ENCODE measurements at regions of chr14 and their contacts with region 1.

Region 1: DNA sequence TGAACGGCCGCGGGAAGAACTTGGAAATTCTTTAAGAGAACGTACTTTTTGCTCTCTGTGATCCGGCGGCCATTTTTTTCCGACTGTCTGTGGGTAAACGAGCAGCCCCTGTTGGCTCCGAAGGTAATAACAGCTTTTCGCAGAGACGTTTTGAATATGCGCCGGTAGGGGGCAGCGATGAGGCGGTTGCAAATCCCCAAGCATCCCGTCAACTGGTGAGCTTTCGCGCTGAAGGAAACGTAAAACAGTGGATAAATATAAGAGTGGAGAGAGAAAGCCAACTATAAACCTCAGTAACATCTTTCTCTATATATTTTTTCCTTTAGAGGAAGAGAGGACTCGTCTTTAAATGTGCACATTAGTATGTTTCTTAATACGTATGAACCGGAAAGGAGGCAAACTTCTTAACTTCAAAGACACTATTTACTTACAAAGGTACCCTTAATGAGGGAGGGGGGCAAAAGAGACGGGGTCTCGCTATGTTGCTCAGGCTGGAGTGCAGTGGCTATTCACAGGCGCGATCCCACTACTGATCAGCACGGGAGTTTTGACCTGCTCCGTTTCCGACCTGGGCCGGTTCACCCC is 9.6 kb upstream of the NEMF start:
- DNase-seq: peak; percentile 93
- H3K4me3 ChIP-seq: peak overlapping the region; percentile 59 to 91 (median 73)
- H3K27ac ChIP-seq: peak overlapping the region; percentile 77
- H3K4me1 ChIP-seq: peaks cover 15% of the 10 kb centered on the region
- H3K27me3 ChIP-seq: no peaks in the 10 kb centered on the region
- CTCF ChIP-seq: peak; percentile 100
- POLR2A ChIP-seq: no peak

Region 2: DNA sequence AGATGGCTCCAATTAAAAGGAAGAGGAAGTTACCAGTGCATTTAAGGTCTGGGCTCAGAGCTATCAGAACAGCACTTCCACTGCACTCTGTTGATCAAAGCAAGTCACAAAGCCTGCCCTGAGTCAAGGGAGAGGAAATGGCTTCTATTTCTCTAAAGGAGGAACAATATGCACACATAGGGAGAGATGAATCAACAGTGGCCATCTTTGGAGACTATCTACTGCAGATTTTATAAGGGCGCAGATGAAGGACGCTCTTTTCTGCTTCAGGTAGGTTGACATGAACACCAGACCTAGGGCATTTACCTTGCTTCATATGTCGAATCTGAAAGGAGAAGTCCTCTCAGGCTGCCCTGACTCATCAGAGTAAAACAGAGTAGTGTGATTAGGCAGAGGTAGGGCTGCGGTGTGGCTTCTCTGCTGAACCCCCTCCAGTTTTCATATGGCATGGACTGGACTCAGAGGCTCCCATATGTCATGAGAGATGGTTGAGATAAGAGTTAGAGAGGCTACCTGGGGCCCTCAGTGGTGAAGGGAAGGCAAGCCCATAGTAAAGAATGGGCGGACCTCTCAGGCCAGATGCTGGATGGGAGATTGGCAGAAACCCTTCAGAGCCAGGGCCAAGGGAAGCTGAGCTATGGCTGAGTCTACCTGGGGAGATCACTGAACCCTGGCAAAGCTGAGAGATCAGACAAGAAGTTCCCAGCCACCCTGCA is 115.1 kb after region 1 on chr14:
- CTCF ChIA-PET with region 1: interaction called, 19 read pairs
- POLR2A ChIA-PET with region 1: no interaction called
- dilution Hi-C with region 1: no loop called
- intact Hi-C with region 1: no loop called
- DNase-seq: peak; percentile 27
- H3K4me3 ChIP-seq: no peak overlapping the region
- H3K27ac ChIP-seq: no peak overlapping the region
- H3K4me1 ChIP-seq: peaks cover 41% of the 10 kb centered on the region
- H3K27me3 ChIP-seq: no peaks in the 10 kb centered on the region
- CTCF ChIP-seq: no peak
- POLR2A ChIP-seq: no peak

Region 3: DNA sequence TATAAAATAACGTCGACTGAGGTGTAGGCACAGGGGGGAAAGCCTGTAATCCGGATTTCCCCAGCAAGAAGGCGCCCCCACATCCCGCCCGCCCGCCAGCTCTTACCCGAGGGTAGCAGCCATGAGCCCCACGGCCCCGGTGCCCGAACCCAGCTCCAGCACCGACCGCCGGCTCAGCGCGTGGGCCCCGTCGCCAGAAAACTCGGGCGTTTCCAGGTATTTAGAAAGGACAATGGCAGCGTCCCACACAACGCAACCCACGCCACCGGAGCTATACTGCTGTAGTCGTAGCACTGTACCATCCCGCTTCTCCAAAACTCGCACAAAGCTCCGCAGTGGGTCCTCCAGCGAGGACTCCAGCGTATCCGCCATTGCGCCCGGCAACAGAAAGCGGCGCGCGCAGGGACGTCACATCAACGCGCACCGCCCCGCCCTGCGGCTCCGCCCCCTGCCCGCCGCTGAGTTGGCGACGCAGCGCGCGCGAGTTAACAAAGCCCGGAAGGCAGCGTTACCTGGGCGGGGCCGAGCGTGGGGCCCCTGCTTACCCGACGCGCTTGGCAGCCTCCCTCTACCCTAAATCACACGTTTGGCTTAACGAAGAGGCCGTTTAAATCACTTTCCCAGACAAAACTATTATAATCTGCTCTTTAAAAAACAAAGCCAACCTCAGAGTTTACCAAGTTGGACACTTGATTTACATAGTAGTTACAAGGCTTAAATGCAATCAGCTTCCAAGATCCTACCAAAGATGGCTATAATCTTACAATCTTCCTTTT is 254.2 kb after region 1 on chr14 and contains the start of gene VCPKMT:
- CTCF ChIA-PET with region 1: interaction called, 22 read pairs
- POLR2A ChIA-PET with region 1: interaction called, 7 read pairs
- dilution Hi-C with region 1: no loop called
- intact Hi-C with region 1: no loop called
- DNase-seq: peak; percentile 95
- H3K4me3 ChIP-seq: peak within 1 kb of the TSS; percentile 72 to 99 (median 78)
- H3K27ac ChIP-seq: peak within 1 kb of the TSS; percentile 73
- H3K4me1 ChIP-seq: peaks cover 17% of the 10 kb centered on the region
- H3K27me3 ChIP-seq: no peaks in the 10 kb centered on the region
- CTCF ChIP-seq: no peak
- POLR2A ChIP-seq: peak; percentile 93
- total RNA-seq, gene VCPKMT: 6.9 and 9.2 TPM in 2 replicates